ENCODE measurements at regions of chr2 and their contacts with region 1.

Region 1: DNA sequence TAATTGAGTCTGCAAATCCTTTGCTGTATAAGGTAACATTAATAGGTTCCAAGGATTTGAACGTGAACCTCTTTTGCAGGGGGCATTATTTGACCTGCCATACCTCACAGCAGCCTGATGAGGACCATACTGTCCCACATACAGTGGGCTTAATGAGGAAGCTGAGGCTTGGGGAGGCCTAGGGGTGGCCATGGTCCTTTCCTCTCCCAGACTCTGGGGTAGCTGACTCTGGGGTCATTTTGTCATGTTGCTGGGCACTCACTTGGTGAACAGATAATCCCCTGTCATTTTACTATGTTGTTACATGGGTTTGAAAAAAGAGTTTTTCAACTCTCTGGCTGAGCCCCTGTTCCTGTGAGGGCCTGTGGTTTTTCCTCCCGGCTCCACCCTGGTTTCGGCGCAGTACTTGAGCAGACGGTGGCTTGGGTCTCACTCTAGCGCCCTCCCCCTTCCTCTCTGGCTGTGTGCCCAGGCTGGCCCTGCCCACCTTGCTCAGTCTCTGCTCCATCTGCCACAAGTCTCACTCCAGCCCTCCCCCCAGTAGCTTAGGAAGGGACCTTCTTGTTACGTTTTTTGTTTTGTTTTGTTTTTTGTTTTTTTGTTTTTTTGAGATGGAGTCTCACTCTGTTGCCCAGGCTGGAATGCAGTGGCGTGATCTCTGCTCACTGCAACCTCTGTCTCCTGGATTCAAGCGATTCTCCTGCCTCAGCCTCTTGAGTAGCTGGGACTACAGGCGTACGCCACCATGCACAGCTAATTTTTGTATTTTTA is 21.0 kb downstream of the INPP4A start:
- DNase-seq: peak; percentile 69 to 92 (median 86)
- ATAC-seq: peak; percentile 69 to 74
- H3K4me3 Mint-ChIP-seq: peak overlapping the region; percentile 77 to 94 (median 88)
- H3K27ac Mint-ChIP-seq: peak overlapping the region; percentile 89 to 99 (median 98)
- H3K4me1 Mint-ChIP-seq: peaks cover 61 to 95% (median 88%) of the 10 kb centered on the region in 4 donors
- H3K27me3 Mint-ChIP-seq: no peaks in the 10 kb centered on the region

Region 2: GRCh38 chr2:98444436-98445176 is 21.0 kb before region 1 on chr2 and contains the start of gene INPP4A:
- POLR2A ChIA-PET with region 1: interaction called, 233 read pairs
- DNase-seq: peak; percentile 70 to 87 (median 79)
- ATAC-seq: peak; percentile 67 to 75
- H3K4me3 Mint-ChIP-seq: peak within 1 kb of the TSS; percentile 94 to 99 (median 96)
- H3K27ac Mint-ChIP-seq: peak within 1 kb of the TSS; percentile 91 to 99 (median 97)
- H3K4me1 Mint-ChIP-seq: peaks cover 23 to 47% (median 34%) of the 10 kb centered on the region in 4 donors
- H3K27me3 Mint-ChIP-seq: no peaks in the 10 kb centered on the region
- polyA plus RNA-seq, gene INPP4A: 37.7 to 64.3 (median 46.3) TPM

Region 3: DNA sequence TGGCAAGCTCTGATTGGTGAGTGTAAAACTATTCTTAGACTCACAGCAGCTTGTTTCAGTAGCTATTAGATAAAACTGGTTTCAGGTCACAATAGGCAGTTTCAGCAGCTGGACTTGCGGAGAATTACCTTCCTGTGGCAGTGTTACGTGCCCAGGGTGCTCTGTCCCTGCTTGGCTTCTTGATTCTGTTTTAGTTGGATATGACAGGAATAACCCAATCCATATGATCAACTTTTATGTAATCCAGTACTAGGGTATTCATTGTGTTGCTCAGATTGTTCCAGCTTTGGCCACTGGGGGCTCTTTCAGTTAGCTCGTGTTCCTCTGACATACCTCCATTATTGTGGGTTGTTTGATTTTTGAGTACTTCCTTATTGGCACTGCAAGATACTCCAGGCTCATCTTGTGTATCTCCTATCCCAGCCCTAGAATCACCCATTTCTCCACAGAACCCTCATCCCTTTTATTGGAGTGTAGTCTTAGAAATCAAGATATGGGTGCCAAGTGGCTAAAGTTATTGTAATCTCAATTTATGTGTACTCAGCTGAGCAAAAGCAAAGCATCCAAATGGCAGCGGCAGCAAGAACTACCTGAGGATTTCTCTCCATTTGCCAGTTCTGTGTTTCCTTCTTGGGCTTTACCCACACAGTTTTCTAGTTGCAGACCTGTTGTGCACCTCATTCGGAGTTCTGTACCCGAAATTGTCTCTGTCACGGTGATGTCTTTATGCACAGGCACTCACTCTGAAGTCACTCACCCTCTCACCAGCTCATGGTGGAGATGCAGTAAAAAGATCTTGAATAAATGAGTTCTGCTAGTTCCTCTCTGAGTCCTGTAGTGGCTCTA is 22.4 kb after region 1 on chr2:
- POLR2A ChIA-PET with region 1: interaction called, 194 read pairs
- DNase-seq: peak in 8 of 10 donors; percentile 38 to 72 (median 60)
- ATAC-seq: peak; percentile 86 to 88
- H3K4me3 Mint-ChIP-seq: peak overlapping the region in 8 of 10 donors; percentile 12 to 69 (median 58)
- H3K27ac Mint-ChIP-seq: peak overlapping the region; percentile 66 to 89 (median 82)
- H3K4me1 Mint-ChIP-seq: peaks cover 66 to 99% (median 95%) of the 10 kb centered on the region in 4 donors
- H3K27me3 Mint-ChIP-seq: no peaks in the 10 kb centered on the region